Mammary epithelial cell (primary cell): ENCODE measurements at regions of chr14 and their contacts with region 1.

Region 1: GRCh38 chr14:33589326-33589725 is 361.5 kb downstream of the EGLN3 start:
- DNase-seq: peak; percentile 97
- H3K4me3 ChIP-seq: no peak overlapping the region
- H3K27ac ChIP-seq: peak overlapping the region; percentile 80
- H3K4me1 ChIP-seq: peaks cover 24% of the 10 kb centered on the region
- H3K27me3 ChIP-seq: no peaks in the 10 kb centered on the region
- CTCF ChIP-seq: no peak

Region 2: DNA sequence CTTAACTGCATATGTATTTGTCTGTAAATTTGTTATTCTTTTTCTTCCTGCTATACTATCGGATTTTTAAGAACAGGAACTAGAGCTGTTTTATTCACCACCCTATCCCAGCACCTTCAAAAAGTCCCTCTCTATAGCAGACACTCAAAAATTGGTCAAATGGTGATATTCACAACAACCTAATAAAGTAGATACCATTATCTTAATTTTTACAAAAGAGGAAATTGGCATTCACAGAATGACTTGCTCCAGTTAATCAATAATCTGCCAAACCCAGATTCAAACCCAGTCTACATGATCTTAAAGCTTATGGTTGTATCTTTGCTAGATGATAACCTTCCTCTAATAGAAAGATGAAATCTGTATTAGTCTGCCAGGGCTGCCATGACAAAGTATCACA is 65.1 kb before region 1 on chr14:
- CTCF ChIA-PET with region 1: no interaction called
- dilution Hi-C with region 1: no loop called
- in situ Hi-C with region 1: no loop called
- intact Hi-C with region 1: loop called (anchors 1 kb)
- DNase-seq: no peak
- H3K4me3 ChIP-seq: no peak overlapping the region
- H3K27ac ChIP-seq: no peak overlapping the region
- H3K4me1 ChIP-seq: peaks cover 3% of the 10 kb centered on the region
- H3K27me3 ChIP-seq: no peaks in the 10 kb centered on the region
- CTCF ChIP-seq: no peak

Region 3: DNA sequence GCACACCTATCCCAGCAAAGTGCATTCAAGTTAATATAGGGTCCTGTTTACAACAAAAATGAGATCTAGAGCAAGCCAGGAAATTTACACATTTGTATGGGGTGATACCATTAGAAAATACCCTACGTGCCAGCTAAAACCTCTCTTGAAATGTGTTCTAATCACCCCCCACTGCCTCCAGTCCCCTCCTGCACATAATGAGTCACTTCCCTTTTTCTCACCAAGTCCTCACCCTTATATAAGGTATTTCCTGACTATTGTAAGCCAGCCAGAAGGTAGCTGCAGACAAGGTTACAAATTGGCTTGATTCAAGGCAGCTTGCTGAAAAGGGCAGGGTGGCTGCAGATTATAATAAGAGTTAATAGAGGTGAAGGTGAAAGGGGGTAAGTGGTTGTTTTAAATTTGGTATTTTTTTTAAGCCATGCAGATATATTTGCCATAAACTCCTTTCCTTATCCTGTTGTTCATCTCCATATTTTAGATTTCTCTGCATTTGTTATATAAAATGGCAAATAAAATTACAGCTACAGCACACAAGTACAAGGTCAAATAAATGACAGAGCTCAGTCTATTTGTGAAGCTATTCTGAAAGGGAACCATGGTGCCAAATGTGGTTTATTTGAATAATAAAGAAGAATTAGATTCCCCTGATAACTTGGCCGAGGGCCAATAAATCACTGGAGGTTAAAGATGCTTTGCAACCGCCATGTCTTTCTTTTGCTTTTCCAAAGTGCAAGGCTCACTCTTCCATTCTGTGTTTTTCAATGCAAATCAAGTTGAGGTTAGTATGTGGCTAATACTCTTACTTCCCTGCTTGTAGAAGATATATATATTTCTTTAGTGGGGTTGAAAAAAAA is 24.3 kb before region 1 on chr14:
- CTCF ChIA-PET with region 1: no interaction called
- dilution Hi-C with region 1: no loop called
- in situ Hi-C with region 1: no loop called
- intact Hi-C with region 1: loop called (anchors 2 kb)
- DNase-seq: peak; percentile 81
- H3K4me3 ChIP-seq: no peak overlapping the region
- H3K27ac ChIP-seq: no peak overlapping the region
- H3K4me1 ChIP-seq: peaks cover 32% of the 10 kb centered on the region
- H3K27me3 ChIP-seq: no peaks in the 10 kb centered on the region
- CTCF ChIP-seq: no peak

Region 4: GRCh38 chr14:33647385-33647786 is 58.1 kb after region 1 on chr14:
- CTCF ChIA-PET with region 1: no interaction called
- dilution Hi-C with region 1: no loop called
- in situ Hi-C with region 1: no loop called
- intact Hi-C with region 1: loop called (anchors 2 kb)
- DNase-seq: peak; percentile 96
- H3K4me3 ChIP-seq: no peak overlapping the region
- H3K27ac ChIP-seq: peak overlapping the region; percentile 91
- H3K4me1 ChIP-seq: peaks cover 19% of the 10 kb centered on the region
- H3K27me3 ChIP-seq: no peaks in the 10 kb centered on the region
- CTCF ChIP-seq: no peak